Naive thymus-derived CD4-positive, alpha-beta T cell (primary cell): ENCODE measurements at regions of chr2 and their contacts with region 1.

Region 1: GRCh38 chr2:74178201-74179062 is at the start of gene MOB1A:
- DNase-seq: peak; percentile 94 to 98 (median 97)
- ATAC-seq: peak; percentile 97
- H3K4me3 ChIP-seq: peak within 1 kb of the TSS; percentile 89
- H3K4me3 Mint-ChIP-seq: peak within 1 kb of the TSS; percentile 86 to 95 (median 91)
- H3K27ac ChIP-seq: peak within 1 kb of the TSS; percentile 97
- H3K27ac Mint-ChIP-seq: peak within 1 kb of the TSS; percentile 82 to 95 (median 90)
- H3K4me1 ChIP-seq: peaks cover 25 to 37% of the 10 kb centered on the region in 2 donors
- H3K4me1 Mint-ChIP-seq: peaks cover 32 to 46% (median 35%) of the 10 kb centered on the region in 7 donors
- H3K27me3 ChIP-seq: no peaks in the 10 kb centered on the region
- H3K27me3 Mint-ChIP-seq: no peaks in the 10 kb centered on the region
- total RNA-seq, gene MOB1A: 113 to 185 (median 140) TPM

Region 2: DNA sequence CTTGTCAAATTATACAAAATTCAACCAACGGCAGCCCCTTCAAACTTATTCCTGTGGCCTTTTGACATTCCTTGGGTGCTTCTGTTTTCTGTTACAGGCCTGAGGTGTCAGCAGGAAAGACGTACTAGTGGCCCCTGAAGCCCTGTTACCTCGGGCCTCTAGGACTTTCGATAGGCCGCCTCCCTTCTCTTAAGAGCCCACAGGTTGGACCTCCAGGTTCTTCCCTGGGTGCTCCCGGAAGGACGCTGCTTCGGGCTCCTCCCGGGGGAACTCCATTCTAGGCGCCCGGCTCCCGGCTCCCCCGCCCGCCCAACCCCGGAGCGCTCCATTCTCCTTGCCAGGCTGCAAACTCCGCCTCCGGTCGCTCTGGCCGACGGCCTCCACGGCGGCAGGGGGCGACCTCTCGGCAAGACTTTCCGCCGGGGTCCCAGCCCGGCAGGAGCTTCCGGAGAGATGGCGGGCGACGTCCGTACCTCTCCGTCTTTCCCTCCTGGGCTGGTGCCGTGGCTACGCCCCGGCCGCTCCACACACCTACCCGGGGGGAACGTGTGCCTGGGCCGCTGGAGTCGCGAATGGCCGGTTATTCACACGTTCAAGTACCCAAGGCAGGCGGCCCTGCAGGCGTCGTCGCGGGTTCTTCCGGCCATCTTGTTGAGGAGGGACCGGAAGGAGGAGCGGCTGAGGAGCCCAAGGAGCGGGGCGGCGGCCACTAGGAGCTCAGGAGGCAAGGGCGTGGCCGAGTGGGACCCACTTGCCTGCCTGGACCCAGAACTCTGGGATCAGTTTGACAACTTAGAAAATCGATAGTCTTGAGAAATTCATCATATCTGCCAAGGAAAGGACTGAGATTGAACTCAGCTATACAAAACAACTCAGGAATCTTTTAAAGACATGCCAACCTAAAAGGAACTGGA is 58.3 kb before region 1 on chr2:
- CTCF ChIA-PET with region 1: interaction called, 3 read pairs
- POLR2A ChIA-PET with region 1: interaction called, 11 read pairs
- intact Hi-C with region 1: loop called in 1 of 2 experiments (anchors 1 kb)
- DNase-seq: peak; percentile 69 to 91 (median 80)
- ATAC-seq: peak; percentile 98
- H3K4me3 ChIP-seq: peak overlapping the region; percentile 89
- H3K4me3 Mint-ChIP-seq: peak overlapping the region; percentile 82 to 92 (median 88)
- H3K27ac ChIP-seq: peak overlapping the region; percentile 83
- H3K27ac Mint-ChIP-seq: peak overlapping the region; percentile 79 to 96 (median 91)
- H3K4me1 ChIP-seq: no peaks in the 10 kb centered on the region
- H3K4me1 Mint-ChIP-seq: peaks cover 8 to 12% (median 9%) of the 10 kb centered on the region in 7 donors
- H3K27me3 ChIP-seq: no peaks in the 10 kb centered on the region
- H3K27me3 Mint-ChIP-seq: peaks cover 0 to 5% (median 2%) of the 10 kb centered on the region in 5 donors

Region 3: GRCh38 chr2:74147727-74148456 is 30.5 kb before region 1 on chr2 and contains the start of gene BOLA3:
- CTCF ChIA-PET with region 1: interaction called, 7 read pairs
- POLR2A ChIA-PET with region 1: interaction called, 24 read pairs
- intact Hi-C with region 1: loop called (anchors 1 to 2 kb)
- DNase-seq: peak; percentile 55 to 93 (median 70)
- ATAC-seq: peak; percentile 95
- H3K4me3 ChIP-seq: peak within 1 kb of the TSS; percentile 72
- H3K4me3 Mint-ChIP-seq: no peak within 1 kb of the TSS
- H3K27ac ChIP-seq: peak within 1 kb of the TSS; percentile 72
- H3K27ac Mint-ChIP-seq: no peak within 1 kb of the TSS
- H3K4me1 ChIP-seq: peaks cover 14 to 15% of the 10 kb centered on the region in 2 donors
- H3K4me1 Mint-ChIP-seq: peaks cover 0 to 15% (median 0%) of the 10 kb centered on the region in 7 donors
- H3K27me3 ChIP-seq: no peaks in the 10 kb centered on the region
- H3K27me3 Mint-ChIP-seq: no peaks in the 10 kb centered on the region
- total RNA-seq, gene BOLA3: 6.9 to 54.8 (median 13.7) TPM

Region 4: GRCh38 chr2:74206180-74206688 is 27.8 kb after region 1 on chr2:
- CTCF ChIA-PET with region 1: interaction called, 3 read pairs
- POLR2A ChIA-PET with region 1: interaction called, 60 read pairs
- intact Hi-C with region 1: loop called in 1 of 2 experiments (anchors 1 kb)
- DNase-seq: peak in 8 of 9 donors; percentile 20 to 54 (median 38)
- ATAC-seq: peak; percentile 87
- H3K4me3 ChIP-seq: peak overlapping the region; percentile 53
- H3K4me3 Mint-ChIP-seq: peak overlapping the region; percentile 72 to 90 (median 82)
- H3K27ac ChIP-seq: peak overlapping the region; percentile 63
- H3K27ac Mint-ChIP-seq: peak overlapping the region; percentile 91 to 98 (median 94)
- H3K4me1 ChIP-seq: peaks cover 22 to 32% of the 10 kb centered on the region in 2 donors
- H3K4me1 Mint-ChIP-seq: peaks cover 23 to 79% (median 38%) of the 10 kb centered on the region in 7 donors
- H3K27me3 ChIP-seq: no peaks in the 10 kb centered on the region
- H3K27me3 Mint-ChIP-seq: no peaks in the 10 kb centered on the region

Region 5: GRCh38 chr2:74278176-74278575 is 99.7 kb after region 1 on chr2:
- CTCF ChIA-PET with region 1: no interaction called
- POLR2A ChIA-PET with region 1: no interaction called
- intact Hi-C with region 1: no loop called
- DNase-seq: no peak
- ATAC-seq: no peak
- H3K4me3 ChIP-seq: no peak overlapping the region
- H3K4me3 Mint-ChIP-seq: no peak overlapping the region
- H3K27ac ChIP-seq: no peak overlapping the region
- H3K27ac Mint-ChIP-seq: no peak overlapping the region
- H3K4me1 ChIP-seq: no peaks in the 10 kb centered on the region
- H3K4me1 Mint-ChIP-seq: peaks cover 0 to 9% (median 0%) of the 10 kb centered on the region in 7 donors
- H3K27me3 ChIP-seq: no peaks in the 10 kb centered on the region
- H3K27me3 Mint-ChIP-seq: peaks cover 0 to 31% (median 0%) of the 10 kb centered on the region in 5 donors

Region 6: GRCh38 chr2:74507145-74507925 is 328.9 kb after region 1 on chr2 and contains the start of gene PCGF1:
- CTCF ChIA-PET with region 1: no interaction called
- POLR2A ChIA-PET with region 1: no interaction called
- intact Hi-C with region 1: loop called in 1 of 2 experiments (anchors 1 kb)
- DNase-seq: peak; percentile 97 to 99 (median 98)
- ATAC-seq: peak; percentile 96
- H3K4me3 ChIP-seq: peak within 1 kb of the TSS; percentile 96
- H3K4me3 Mint-ChIP-seq: peak within 1 kb of the TSS; percentile 95 to 100 (median 99)
- H3K27ac ChIP-seq: peak within 1 kb of the TSS; percentile 94
- H3K27ac Mint-ChIP-seq: peak within 1 kb of the TSS; percentile 97 to 100 (median 100)
- H3K4me1 ChIP-seq: peaks cover 16 to 29% of the 10 kb centered on the region in 2 donors
- H3K4me1 Mint-ChIP-seq: peaks cover 34 to 66% (median 57%) of the 10 kb centered on the region in 7 donors
- H3K27me3 ChIP-seq: peaks cover 3 to 16% of the 10 kb centered on the region in 2 donors
- H3K27me3 Mint-ChIP-seq: peaks cover 47 to 58% (median 49%) of the 10 kb centered on the region in 5 donors
- total RNA-seq, gene PCGF1: 25.7 to 37.0 (median 31.2) TPM